HEK293T (cell line): ENCODE measurements at regions of chr1 and their contacts with region 1.

Region 1: GRCh38 chr1:116418091-116418830 is 45.2 kb downstream of the ATP1A1 start:
- DNase-seq: peak; percentile 79

Region 2: DNA sequence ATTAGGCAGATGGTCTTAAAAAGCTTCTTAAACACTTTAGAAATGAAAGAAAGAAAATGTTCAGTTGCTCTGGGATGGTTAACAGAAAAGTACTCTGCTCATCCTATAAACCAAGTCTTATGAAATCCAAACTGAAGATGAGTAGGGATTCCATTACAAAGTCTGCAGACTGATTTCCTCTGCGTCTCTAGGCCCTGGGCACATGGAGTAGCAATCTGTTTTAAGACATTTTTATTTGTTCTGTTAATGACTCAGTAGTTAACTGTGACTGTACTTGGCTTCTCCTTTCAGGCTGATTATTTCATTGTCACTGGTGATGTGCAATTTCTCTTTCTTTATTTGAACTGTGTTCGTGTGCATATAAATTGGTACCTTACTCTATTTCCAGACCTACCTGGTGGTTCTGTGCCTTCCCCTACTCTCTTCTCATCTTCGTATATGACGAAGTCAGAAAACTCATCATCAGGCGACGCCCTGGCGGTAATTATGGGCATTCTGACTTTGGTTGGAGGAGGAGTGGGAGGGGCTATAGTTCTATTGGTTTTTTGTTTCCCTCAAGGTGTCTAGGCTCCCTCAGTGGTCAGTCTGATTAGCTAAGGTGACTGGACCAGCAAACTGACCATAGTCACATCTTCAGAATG is 14.6 kb before region 1 on chr1:
- CTCF ChIA-PET with region 1: no interaction called
- POLR2A ChIA-PET with region 1: interaction called, 17 read pairs
- DNase-seq: no peak